WTC11 (cell line): ENCODE measurements at regions of chr22 and their contacts with region 1.

Region 1: GRCh38 chr22:39215426-39216120 is 29.2 kb downstream of the PDGFB start:
- DNase-seq: peak; percentile 58
- ATAC-seq: peak; percentile 22
- H3K4me3 Mint-ChIP-seq: no peak overlapping the region
- H3K27ac Mint-ChIP-seq: peak overlapping the region; percentile 99
- H3K4me1 Mint-ChIP-seq: peaks cover 43% of the 10 kb centered on the region
- H3K27me3 Mint-ChIP-seq: no peaks in the 10 kb centered on the region
- CTCF ChIP-seq: 0 out of 2 replicates have a peak, but pooled peaks have one; percentile 23

Region 2: DNA sequence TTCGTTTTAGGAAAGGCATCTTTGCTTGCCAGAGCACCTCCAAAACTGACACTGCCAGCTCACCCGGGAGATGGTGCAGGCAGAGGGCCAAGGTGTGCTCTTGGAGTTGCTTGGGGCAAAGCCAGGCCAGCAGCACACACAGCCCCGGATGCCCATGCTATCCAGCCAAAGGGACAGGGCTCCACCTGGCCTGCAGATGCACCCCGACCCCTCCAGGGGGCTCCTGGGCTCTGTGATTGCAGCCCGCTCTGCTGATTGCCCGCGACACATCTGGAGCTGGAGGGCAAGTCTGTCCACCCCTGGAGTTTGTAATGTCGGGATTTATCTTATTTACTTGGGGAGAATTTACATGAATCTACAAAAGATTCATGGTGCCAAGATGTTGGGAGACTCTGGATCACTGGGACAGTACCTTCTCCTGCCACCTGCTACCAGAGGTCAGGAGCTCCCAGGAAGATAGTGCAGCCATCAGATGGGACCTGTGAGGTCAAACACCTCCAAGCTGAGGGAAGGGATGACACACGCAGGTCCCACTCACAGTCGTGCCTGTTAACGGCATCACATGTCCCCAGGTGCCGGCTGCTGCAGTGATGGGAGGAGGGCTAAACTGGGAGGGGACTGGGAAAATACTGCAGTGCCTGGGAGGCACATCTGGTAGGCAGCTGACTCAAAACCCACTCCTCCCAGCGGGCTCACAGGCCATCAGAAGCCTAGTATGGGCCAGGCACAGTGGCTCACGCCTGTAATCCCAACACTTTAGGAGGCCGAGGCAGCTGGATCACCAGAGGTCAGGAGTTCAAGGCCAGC is 80.3 kb before region 1 on chr22:
- CTCF ChIA-PET with region 1: interaction called, 14 read pairs
- POLR2A ChIA-PET with region 1: no interaction called
- DNase-seq: peak; percentile 90
- ATAC-seq: peak; percentile 94
- H3K4me3 Mint-ChIP-seq: no peak overlapping the region
- H3K27ac Mint-ChIP-seq: peak overlapping the region; percentile 79
- H3K4me1 Mint-ChIP-seq: peaks cover 28% of the 10 kb centered on the region
- H3K27me3 Mint-ChIP-seq: no peaks in the 10 kb centered on the region; the same call in 1 of the 2 replicates
- CTCF ChIP-seq: peak; percentile 67

Region 3: DNA sequence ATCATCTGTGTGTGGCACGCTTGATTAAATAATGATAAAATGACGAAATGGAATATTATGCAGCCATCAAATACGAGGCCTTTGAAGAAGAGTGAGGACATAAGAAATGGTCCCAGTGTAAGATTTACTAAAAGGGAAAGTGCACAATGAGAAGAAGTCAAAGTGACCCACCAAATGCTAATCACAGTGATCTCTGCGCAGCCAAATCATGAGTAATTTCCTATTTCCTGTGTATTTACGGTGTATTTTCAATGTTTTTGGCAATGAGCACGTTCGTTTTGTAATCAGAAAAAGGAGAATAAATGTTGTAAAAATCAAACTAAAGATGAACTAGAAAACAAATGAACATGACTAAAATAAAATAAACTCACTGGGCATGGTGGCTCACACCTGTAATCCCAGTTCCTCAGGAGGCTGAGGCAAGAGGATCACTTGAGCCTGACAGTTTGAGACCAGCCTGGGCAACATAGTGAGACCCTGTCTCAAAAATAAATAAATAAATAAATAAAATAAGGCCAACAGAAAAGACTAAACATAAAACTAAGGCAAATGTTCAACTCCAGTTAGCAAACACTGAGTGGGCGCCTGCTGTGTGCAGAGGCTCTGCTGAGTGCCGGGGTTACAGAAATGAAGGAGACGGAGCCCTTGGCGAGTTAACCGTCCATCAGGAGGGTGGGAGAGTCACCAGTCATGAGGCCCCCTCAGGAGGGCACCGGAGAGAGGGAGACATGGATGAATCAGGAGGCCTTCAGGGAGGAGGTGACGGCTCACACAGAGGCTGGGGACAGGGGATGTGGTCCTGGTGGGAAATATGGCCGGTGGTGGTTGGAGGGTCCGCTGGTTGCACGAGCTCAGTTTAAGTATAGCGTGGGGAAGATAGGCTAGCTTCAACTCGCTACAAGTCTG is 37.1 kb before region 1 on chr22:
- CTCF ChIA-PET with region 1: interaction called, 17 read pairs
- POLR2A ChIA-PET with region 1: interaction called, 45 read pairs
- DNase-seq: no peak
- ATAC-seq: no peak
- H3K4me3 Mint-ChIP-seq: no peak overlapping the region
- H3K27ac Mint-ChIP-seq: peak overlapping the region; percentile 92
- H3K4me1 Mint-ChIP-seq: peaks cover 73% of the 10 kb centered on the region
- H3K27me3 Mint-ChIP-seq: no peaks in the 10 kb centered on the region; the same call in none of the 2 replicates
- CTCF ChIP-seq: no peak

Region 4: GRCh38 chr22:39205338-39206021 is 10.1 kb before region 1 on chr22:
- CTCF ChIA-PET with region 1: interaction called, 20 read pairs
- POLR2A ChIA-PET with region 1: interaction called, 9 read pairs
- DNase-seq: no peak
- ATAC-seq: no peak
- H3K4me3 Mint-ChIP-seq: no peak overlapping the region
- H3K27ac Mint-ChIP-seq: peak overlapping the region; percentile 79; the same call in 1 of the 2 replicates
- H3K4me1 Mint-ChIP-seq: peaks cover 28% of the 10 kb centered on the region
- H3K27me3 Mint-ChIP-seq: no peaks in the 10 kb centered on the region
- CTCF ChIP-seq: no peak

Region 5: GRCh38 chr22:39236321-39237317 is 21.0 kb after region 1 on chr22:
- CTCF ChIA-PET with region 1: interaction called, 43 read pairs
- POLR2A ChIA-PET with region 1: interaction called, 27 read pairs
- DNase-seq: no peak
- ATAC-seq: no peak
- H3K4me3 Mint-ChIP-seq: no peak overlapping the region
- H3K27ac Mint-ChIP-seq: no peak overlapping the region
- H3K4me1 Mint-ChIP-seq: peaks cover 60% of the 10 kb centered on the region
- H3K27me3 Mint-ChIP-seq: peaks cover 59% of the 10 kb centered on the region
- CTCF ChIP-seq: no peak

Region 6: GRCh38 chr22:39300186-39300830 is 84.7 kb after region 1 on chr22:
- CTCF ChIA-PET with region 1: interaction called, 17 read pairs
- POLR2A ChIA-PET with region 1: interaction called, 3 read pairs
- DNase-seq: peak; percentile 44
- ATAC-seq: peak; percentile 27
- H3K4me3 Mint-ChIP-seq: no peak overlapping the region
- H3K27ac Mint-ChIP-seq: peak overlapping the region; percentile 76
- H3K4me1 Mint-ChIP-seq: peaks cover 36% of the 10 kb centered on the region
- H3K27me3 Mint-ChIP-seq: no peaks in the 10 kb centered on the region; the same call in 1 of the 2 replicates
- CTCF ChIP-seq: no peak